Heart right ventricle (tissue), 16 donors: ENCODE measurements at regions of chr4 and their contacts with region 1.

Region 1: DNA sequence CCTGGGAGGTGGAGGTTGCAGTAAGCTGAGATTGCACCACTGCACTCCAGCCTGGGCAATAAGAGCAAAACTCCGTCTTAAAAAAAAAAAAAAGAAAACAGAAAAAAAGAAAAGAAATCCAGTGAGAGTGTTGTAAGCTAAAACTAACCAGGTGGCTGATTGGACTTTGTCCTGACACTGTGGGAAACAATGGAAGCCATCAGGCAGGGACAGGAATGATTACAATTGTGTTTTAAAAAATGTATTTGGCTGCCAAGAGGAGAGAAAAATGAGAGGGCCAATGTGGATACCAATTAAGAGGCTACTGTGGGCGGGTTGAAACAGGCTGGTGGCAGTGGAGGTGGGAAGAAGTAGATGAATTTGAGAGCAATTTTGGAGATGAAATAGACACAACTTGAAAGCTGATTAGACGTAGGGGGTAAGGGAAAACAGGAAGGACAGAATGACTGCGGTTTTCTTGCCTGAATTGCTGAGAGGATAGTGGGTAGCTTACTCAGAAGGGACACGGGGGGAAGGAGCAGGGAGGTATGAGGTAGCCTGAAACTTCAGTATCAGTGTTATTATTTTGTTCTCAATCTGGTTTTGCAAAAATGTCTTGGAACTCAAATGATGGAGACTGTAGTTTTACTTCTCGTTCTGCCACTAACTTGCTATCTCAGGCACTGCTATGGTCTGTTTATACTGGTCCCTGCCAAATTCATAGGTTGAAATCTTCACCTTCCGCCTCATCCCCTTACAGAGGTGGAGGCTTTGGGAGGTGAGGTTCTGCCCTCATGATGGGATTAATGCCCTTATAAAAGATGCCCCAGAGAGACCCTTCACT is 45.6 kb upstream of the CHRNA9 start:
- DNase-seq: no peak
- ATAC-seq: no peak
- H3K4me3 ChIP-seq: no peak overlapping the region
- H3K27ac ChIP-seq: peak overlapping the region in 1 of 10 donors; percentile 31
- H3K4me1 ChIP-seq: peaks cover 0 to 20% (median 0%) of the 10 kb centered on the region in 9 donors
- H3K27me3 ChIP-seq: peaks cover 0 to 10% (median 0%) of the 10 kb centered on the region in 7 donors
- CTCF ChIP-seq: no peak

Region 2: GRCh38 chr4:40238700-40239548 is 50.7 kb before region 1 on chr4:
- intact Hi-C with region 1: loop called in 1 of 10 experiments (anchors 10 kb)
- DNase-seq: no peak
- ATAC-seq: peak in 3 of 8 donors; percentile 38 to 46 (median 38)
- H3K4me3 ChIP-seq: peak overlapping the region in 1 of 10 donors; percentile 27
- H3K27ac ChIP-seq: peak overlapping the region in 1 of 10 donors; percentile 82
- H3K4me1 ChIP-seq: peaks cover 0 to 49% (median 0%) of the 10 kb centered on the region in 9 donors
- H3K27me3 ChIP-seq: no peaks in the 10 kb centered on the region
- CTCF ChIP-seq: no peak